Activated CD8-positive, alpha-beta T cell treated with anti-CD3 and anti-CD28 coated beads, Interleukin-2, amount 10 ng/mL, durations not matched to agents 7 days and 5 days (primary cell): ENCODE measurements at regions of chr1 and their contacts with region 1.

Region 1: GRCh38 chr1:40979233-40980067 is at the start of gene CTPS1:
- DNase-seq: peak; percentile 96
- ATAC-seq: peak; percentile 93
- H3K4me3 Mint-ChIP-seq: peak within 1 kb of the TSS; percentile 87
- H3K27ac Mint-ChIP-seq: peak within 1 kb of the TSS; percentile 95
- H3K4me1 Mint-ChIP-seq: peaks cover 48% of the 10 kb centered on the region
- H3K27me3 Mint-ChIP-seq: no peaks in the 10 kb centered on the region
- total RNA-seq, gene CTPS1: 72.6 to 74.5 TPM

Region 2: GRCh38 chr1:40862008-40862863 is 117.2 kb before region 1 on chr1 and contains the start of gene CITED4:
- CTCF ChIA-PET with region 1: interaction called, 5 read pairs
- POLR2A ChIA-PET with region 1: interaction called, 15 read pairs
- DNase-seq: peak; percentile 97
- ATAC-seq: peak; percentile 93
- H3K4me3 Mint-ChIP-seq: peak within 1 kb of the TSS; percentile 79
- H3K27ac Mint-ChIP-seq: peak within 1 kb of the TSS; percentile 96
- H3K4me1 Mint-ChIP-seq: peaks cover 30% of the 10 kb centered on the region
- H3K27me3 Mint-ChIP-seq: peaks cover 21% of the 10 kb centered on the region
- total RNA-seq, gene CITED4: 9.1 to 10.0 TPM

Region 3: GRCh38 chr1:41003640-41004220 is 24.3 kb after region 1 on chr1:
- CTCF ChIA-PET with region 1: interaction called, 10 read pairs
- POLR2A ChIA-PET with region 1: interaction called, 20 read pairs
- DNase-seq: peak; percentile 90
- ATAC-seq: peak; percentile 98
- H3K4me3 Mint-ChIP-seq: no peak overlapping the region
- H3K27ac Mint-ChIP-seq: peak overlapping the region; percentile 82
- H3K4me1 Mint-ChIP-seq: peaks cover 27% of the 10 kb centered on the region
- H3K27me3 Mint-ChIP-seq: no peaks in the 10 kb centered on the region